Left ventricle myocardium inferior (tissue), 1 donor: ENCODE measurements at regions of chr16 and their contacts with region 1.

Region 1: DNA sequence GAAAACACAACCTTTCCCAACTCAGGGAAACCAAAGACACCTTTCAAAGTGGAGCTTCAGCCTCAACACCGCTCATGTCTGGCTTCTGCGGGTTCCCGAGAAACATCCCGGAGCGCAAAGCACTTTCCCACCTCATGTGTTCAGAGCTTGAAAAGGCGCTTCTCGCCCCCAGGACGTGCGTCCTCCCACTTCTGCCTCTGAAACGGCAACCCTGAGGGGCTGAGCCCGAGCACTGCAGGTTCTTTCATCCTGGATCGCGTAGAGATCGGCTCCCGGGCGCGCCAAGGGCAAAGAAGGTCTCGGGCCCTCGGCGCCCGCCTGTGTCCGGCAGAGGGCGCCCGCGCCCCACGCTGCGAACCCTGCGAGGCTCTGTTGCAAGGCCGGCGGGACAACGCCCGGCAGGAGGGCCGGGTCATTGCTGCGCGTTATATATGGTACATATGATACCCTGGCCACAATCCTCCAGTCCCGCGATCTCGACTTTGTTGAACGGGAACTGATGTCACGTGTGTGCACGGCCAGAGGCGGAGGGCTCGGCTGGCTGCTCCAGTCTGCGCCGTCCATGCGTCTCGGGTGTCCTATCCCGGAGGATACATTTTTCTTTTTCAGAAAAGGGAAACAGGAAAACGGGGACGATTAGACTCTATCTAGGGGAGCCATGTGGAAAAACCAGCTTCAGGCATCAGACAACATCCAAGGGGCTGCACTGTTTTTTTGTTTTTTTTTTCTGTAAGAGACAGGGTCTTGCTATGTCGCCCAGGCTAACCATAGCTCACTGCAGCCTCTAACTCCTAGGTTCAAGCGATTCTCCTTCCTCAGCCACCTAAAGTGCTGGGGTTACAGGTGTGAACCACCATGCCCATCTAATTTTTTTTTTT is 19.1 kb downstream of the COQ7 start:
- DNase-seq: peak; percentile 82
- H3K4me3 ChIP-seq: peak overlapping the region; percentile 63
- H3K27ac ChIP-seq: peak overlapping the region; percentile 39
- H3K4me1 ChIP-seq: peaks cover 8% of the 10 kb centered on the region
- H3K27me3 ChIP-seq: no peaks in the 10 kb centered on the region
- CTCF ChIP-seq: peak; percentile 100

Region 2: DNA sequence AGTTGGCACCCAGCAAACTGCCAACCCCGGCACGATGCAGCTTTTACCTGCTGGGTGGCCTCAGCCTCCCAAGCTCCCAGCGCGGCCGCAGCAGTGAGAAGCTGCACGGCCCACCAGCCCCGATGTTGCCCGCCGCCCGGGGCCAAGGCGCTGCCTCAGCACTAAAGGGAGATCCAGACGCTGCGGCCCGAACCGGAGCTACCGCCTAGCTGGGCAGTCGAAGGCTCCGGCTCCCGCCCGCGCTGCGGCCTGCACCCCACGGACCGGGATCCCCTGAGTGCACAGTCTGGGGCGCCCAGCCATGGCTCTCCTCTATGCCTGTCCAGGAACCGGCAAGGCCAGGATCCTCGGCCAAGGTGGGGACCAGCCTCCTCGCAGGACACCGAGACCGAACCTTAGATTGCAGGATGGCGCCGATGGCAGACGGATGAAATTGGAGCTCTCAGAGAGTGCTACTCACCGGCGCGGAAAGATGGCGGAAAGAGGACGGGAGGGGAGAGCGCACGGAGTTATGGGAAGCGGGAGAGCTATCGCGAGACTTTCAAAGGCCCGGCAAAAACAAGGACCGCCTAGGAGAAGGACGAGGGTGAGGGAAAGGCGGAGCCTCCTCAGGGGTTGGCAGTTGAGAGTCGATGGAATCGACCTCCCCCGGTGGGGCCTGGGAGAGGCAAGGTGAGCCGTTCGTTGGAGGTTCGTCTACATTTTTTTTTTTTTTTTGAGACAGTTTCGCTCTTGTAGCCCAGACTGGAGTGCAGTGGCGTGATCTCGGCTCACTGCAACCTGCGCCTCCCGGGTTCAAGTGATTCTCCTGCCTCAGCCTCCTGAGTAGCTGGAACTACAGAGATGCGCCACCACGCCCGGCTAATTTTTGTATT is 296.5 kb before region 1 on chr16 and contains the start of gene RPS15A:
- intact Hi-C with region 1: no loop called
- DNase-seq: peak; percentile 93
- H3K4me3 ChIP-seq: peak within 1 kb of the TSS; percentile 97
- H3K27ac ChIP-seq: peak within 1 kb of the TSS; percentile 84
- H3K4me1 ChIP-seq: peaks cover 56% of the 10 kb centered on the region
- H3K27me3 ChIP-seq: no peaks in the 10 kb centered on the region
- CTCF ChIP-seq: no peak
- total RNA-seq, gene RPS15A: 683 TPM

Region 3: GRCh38 chr16:18959031-18959505 is 127.5 kb before region 1 on chr16:
- intact Hi-C with region 1: no loop called
- DNase-seq: no peak
- H3K4me3 ChIP-seq: no peak overlapping the region
- H3K27ac ChIP-seq: peak overlapping the region; percentile 80
- H3K4me1 ChIP-seq: peaks cover 24% of the 10 kb centered on the region
- H3K27me3 ChIP-seq: no peaks in the 10 kb centered on the region
- CTCF ChIP-seq: no peak

Region 4: GRCh38 chr16:19179546-19180490 is 93.3 kb after region 1 on chr16:
- intact Hi-C with region 1: loop called (anchors 10 kb)
- DNase-seq: peak; percentile 64
- H3K4me3 ChIP-seq: no peak overlapping the region
- H3K27ac ChIP-seq: no peak overlapping the region
- H3K4me1 ChIP-seq: no peaks in the 10 kb centered on the region
- H3K27me3 ChIP-seq: peaks cover 4% of the 10 kb centered on the region
- CTCF ChIP-seq: peak; percentile 71

Region 5: GRCh38 chr16:19375561-19376158 is 289.1 kb after region 1 on chr16:
- intact Hi-C with region 1: loop called (anchors 5 kb)
- DNase-seq: no peak
- H3K4me3 ChIP-seq: no peak overlapping the region
- H3K27ac ChIP-seq: no peak overlapping the region
- H3K4me1 ChIP-seq: no peaks in the 10 kb centered on the region
- H3K27me3 ChIP-seq: peaks cover 31% of the 10 kb centered on the region
- CTCF ChIP-seq: peak; percentile 89

Region 6: DNA sequence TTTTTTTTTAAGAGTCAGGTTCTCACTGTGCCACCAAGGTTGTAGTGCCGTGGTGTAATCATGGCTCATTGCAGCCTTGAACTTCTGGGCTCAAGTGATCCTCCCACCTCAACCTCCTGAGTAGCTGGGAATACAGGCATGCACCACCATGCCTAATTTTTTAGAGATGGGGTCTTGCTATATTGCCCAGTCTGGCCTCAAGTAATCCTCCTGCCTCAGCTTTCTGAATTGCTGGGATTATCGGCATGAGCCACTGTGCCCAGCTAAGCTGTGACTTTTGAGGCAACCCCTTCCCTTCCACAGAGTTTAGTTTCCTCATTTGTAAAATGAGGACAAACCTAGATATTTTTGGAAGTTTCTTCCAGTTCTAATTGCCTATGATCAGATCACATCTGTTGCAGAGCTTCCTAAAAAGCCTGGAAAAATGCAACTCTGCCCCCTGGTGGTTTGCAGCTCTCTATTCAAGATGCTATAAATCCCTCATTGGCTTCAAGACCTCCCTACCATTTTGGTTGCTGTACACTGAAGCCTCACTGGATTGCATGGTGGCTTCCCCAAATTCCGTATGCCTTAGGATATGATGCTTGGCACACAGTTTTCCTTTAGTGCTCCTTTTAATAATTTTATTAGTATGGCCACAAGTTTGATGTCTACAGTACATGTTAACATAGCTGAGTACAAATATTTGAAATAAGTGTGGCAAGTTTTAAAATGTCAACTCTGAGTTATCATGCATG is 416.0 kb after region 1 on chr16:
- intact Hi-C with region 1: loop called (anchors 10 kb)
- DNase-seq: peak; percentile 36
- H3K4me3 ChIP-seq: no peak overlapping the region
- H3K27ac ChIP-seq: no peak overlapping the region
- H3K4me1 ChIP-seq: peaks cover 9% of the 10 kb centered on the region
- H3K27me3 ChIP-seq: no peaks in the 10 kb centered on the region
- CTCF ChIP-seq: peak; percentile 77